HepG2 (cell line): ENCODE measurements at regions of chr20 and their contacts with region 1.

Region 1: DNA sequence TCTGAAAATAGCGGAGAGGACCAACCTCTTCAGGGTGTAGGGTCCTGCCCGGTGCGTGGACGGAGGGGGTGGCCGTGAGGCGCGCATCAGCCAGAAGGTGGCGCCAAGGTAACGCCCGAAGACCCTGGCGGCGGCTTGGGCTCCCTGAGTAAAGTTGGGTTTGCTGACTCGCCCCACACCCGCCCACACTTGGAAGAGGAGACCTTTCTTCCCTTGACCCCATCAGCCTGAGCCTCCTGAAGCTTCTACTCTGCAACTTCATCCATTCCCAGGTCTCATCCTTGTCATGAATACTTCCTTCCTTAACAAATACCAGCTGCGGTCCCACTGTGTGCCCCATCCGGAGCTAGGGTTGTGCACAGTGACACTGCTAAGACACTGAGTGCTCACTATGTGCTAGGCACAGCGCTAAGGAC is 14.6 kb downstream of the CD40 start:
- DNase-seq: peak; percentile 53
- ATAC-seq: peak; percentile 94
- H3K4me3 ChIP-seq: no peak overlapping the region
- H3K27ac ChIP-seq: no peak overlapping the region
- H3K4me1 ChIP-seq: no peaks in the 10 kb centered on the region
- H3K27me3 ChIP-seq: peaks cover 16 to 75% of the 10 kb centered on the region in 2 experiments
- CTCF ChIP-seq: peak; percentile 97
- EP300 ChIP-seq: no peak
- POLR2A ChIP-seq: no peak
- RAD21 ChIP-seq: peak; percentile 98

Region 2: DNA sequence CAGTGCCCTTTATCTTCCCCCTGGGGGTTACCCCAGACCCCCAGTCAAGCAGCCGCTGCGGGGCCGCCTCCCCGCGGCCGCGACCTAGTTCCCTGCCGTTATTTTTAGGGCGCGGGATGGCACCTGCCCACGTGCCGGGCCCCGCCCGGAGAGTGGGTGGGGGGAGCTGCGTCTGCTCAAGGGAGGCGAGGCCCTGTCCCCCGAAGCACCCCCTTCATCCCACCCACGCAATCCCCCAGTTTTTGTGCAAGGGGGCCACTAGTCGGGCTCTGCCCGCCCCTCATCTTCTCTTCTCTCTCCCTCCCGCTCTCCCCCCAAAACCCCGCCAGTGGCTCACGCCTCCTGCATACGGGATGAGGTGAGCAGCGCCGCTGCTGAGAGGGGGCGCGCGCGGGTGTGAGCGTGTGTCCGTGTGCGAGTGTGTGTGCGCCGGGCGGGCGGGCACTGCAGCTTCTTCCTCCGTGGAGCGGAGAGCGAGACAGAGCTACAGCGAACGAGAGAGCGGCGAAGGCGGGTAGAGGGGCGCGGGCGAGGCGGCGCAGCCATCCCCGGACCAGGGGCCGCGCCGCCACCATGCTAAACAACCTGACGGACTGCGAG is 103.8 kb before region 1 on chr20 and contains the start of gene SLC12A5:
- CTCF ChIA-PET with region 1: no interaction called
- POLR2A ChIA-PET with region 1: no interaction called
- in situ Hi-C with region 1: no loop called
- intact Hi-C with region 1: no loop called
- DNase-seq: no peak
- ATAC-seq: no peak; the same call in 2 of the 3 replicates
- H3K4me3 ChIP-seq: no peak within 1 kb of the TSS
- H3K27ac ChIP-seq: no peak within 1 kb of the TSS
- H3K4me1 ChIP-seq: no peaks in the 10 kb centered on the region
- H3K27me3 ChIP-seq: peaks cover 7 to 32% of the 10 kb centered on the region in 2 experiments
- CTCF ChIP-seq: no peak
- EP300 ChIP-seq: no peak
- POLR2A ChIP-seq: no peak
- RAD21 ChIP-seq: no peak
- total RNA-seq, gene SLC12A5: 5.3 and 5.4 TPM in 2 replicates

Region 3: GRCh38 chr20:46151936-46152335 is 19.2 kb after region 1 on chr20:
- CTCF ChIA-PET with region 1: interaction called, 12 read pairs
- POLR2A ChIA-PET with region 1: no interaction called
- in situ Hi-C with region 1: no loop called
- intact Hi-C with region 1: no loop called
- DNase-seq: peak; percentile 45
- ATAC-seq: peak; percentile 88
- H3K4me3 ChIP-seq: no peak overlapping the region
- H3K27ac ChIP-seq: no peak overlapping the region
- H3K4me1 ChIP-seq: peaks cover 9% of the 10 kb centered on the region; the same call in 1 of the 2 replicates
- H3K27me3 ChIP-seq: peaks cover 2 to 46% of the 10 kb centered on the region in 2 experiments; a peak in 4 of 5 replicates
- CTCF ChIP-seq: peak; percentile 79
- EP300 ChIP-seq: no peak
- POLR2A ChIP-seq: no peak
- RAD21 ChIP-seq: peak; percentile 72

Region 4: DNA sequence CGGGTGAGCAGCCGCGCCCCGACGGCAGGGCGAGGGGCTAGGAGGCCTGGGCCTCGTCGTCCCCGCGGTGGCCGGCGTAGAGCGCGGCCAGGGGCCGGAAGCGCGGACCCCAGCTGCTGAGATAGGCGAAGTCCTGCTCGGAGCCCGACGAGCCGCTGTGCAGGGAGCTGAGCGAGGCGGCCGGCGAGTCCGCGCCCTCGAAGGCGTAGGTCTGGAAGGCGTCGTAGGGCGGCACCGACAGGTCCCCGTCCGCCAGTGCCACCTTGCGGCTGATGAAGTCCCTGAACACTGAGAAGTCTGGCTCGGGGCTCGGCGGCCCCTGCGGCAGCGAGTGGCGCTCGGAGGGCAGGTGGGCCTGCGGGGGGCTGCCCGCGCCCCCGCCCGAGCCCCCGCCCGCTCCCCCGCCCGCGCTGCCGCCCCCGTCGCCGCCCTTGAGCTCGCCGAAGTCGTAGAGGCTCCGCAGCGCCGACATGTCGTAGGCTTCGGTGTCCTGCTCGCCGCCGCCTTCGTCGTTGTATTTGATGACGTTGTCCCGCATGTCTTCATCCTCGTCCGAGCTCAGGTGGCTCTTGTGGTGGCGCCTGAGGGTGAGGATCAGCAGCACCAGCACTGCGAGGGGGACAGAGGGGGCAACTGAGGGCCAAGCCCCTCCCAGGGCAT is 41.9 kb after region 1 on chr20:
- CTCF ChIA-PET with region 1: interaction called, 19 read pairs
- POLR2A ChIA-PET with region 1: no interaction called
- in situ Hi-C with region 1: no loop called
- intact Hi-C with region 1: loop called (anchors 1 kb)
- DNase-seq: peak; percentile 57
- ATAC-seq: peak; percentile 90
- H3K4me3 ChIP-seq: no peak overlapping the region; a peak in 1 of 6 replicates
- H3K27ac ChIP-seq: no peak overlapping the region
- H3K4me1 ChIP-seq: no peaks in the 10 kb centered on the region
- H3K27me3 ChIP-seq: peaks cover 12 to 82% of the 10 kb centered on the region in 2 experiments; a peak in 4 of 5 replicates
- CTCF ChIP-seq: peak; percentile 87
- EP300 ChIP-seq: no peak
- POLR2A ChIP-seq: no peak
- RAD21 ChIP-seq: peak; percentile 89

Region 5: DNA sequence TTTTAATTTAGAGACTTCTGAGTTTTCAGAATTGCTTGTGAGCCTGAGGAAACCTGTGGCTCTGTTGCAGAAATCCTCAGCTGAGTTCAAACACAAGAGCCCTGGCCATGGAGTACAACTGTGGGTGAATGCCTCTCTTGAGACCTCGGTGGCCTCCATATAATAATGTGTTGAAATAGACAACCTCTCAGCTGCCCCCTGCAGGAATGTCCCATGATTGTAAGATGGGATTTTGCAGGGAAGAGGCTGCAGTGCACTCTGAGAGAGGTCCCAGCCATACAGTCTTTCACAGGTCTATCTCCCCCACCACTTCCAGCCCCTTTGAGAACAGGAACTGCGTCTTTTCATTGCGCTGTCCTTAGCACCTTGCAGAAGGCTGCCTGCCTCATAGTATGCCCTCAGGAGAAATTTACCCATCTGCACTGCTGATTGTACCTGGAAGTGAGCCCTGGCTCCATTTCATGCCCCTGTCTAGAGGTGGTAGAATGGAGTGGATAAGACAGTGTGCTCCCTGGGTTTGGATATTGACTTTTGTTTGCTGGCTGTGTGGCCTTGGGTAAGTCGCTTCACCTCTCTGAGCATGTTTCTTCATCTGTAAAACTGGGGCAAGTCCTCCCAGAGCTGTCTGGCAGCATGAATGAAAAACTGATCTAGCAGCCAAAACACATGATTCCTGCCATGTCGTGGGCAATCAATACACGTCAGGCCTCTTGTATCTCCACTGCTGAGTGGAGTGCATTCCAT is 192.4 kb after region 1 on chr20:
- CTCF ChIA-PET with region 1: interaction called, 4 read pairs
- POLR2A ChIA-PET with region 1: no interaction called
- in situ Hi-C with region 1: no loop called
- intact Hi-C with region 1: loop called (anchors 1 kb)
- DNase-seq: peak; percentile 69
- ATAC-seq: peak; percentile 91
- H3K4me3 ChIP-seq: no peak overlapping the region
- H3K27ac ChIP-seq: no peak overlapping the region
- H3K4me1 ChIP-seq: no peaks in the 10 kb centered on the region
- H3K27me3 ChIP-seq: peaks cover 12 to 53% of the 10 kb centered on the region in 2 experiments
- CTCF ChIP-seq: peak; percentile 68
- EP300 ChIP-seq: no peak
- POLR2A ChIP-seq: no peak
- RAD21 ChIP-seq: 0 out of 2 replicates have a peak, but pooled peaks have one; percentile 33

Region 6: GRCh38 chr20:46349035-46349741 is 216.5 kb after region 1 on chr20:
- CTCF ChIA-PET with region 1: no interaction called
- POLR2A ChIA-PET with region 1: no interaction called
- in situ Hi-C with region 1: no loop called
- intact Hi-C with region 1: loop called (anchors 1 kb)
- DNase-seq: peak; percentile 46
- ATAC-seq: peak; percentile 58
- H3K4me3 ChIP-seq: no peak overlapping the region
- H3K27ac ChIP-seq: no peak overlapping the region
- H3K4me1 ChIP-seq: peaks cover 39% of the 10 kb centered on the region
- H3K27me3 ChIP-seq: no peaks in the 10 kb centered on the region
- CTCF ChIP-seq: peak; percentile 96
- EP300 ChIP-seq: no peak
- POLR2A ChIP-seq: no peak
- RAD21 ChIP-seq: peak; percentile 87

Region 7: GRCh38 chr20:47038566-47039560 is 906.1 kb after region 1 on chr20:
- CTCF ChIA-PET with region 1: no interaction called
- POLR2A ChIA-PET with region 1: no interaction called
- in situ Hi-C with region 1: no loop called
- intact Hi-C with region 1: no loop called
- DNase-seq: no peak
- ATAC-seq: no peak
- H3K4me3 ChIP-seq: no peak overlapping the region
- H3K27ac ChIP-seq: no peak overlapping the region
- H3K4me1 ChIP-seq: no peaks in the 10 kb centered on the region
- H3K27me3 ChIP-seq: peaks cover 2 to 24% of the 10 kb centered on the region in 2 experiments; a peak in 4 of 5 replicates
- CTCF ChIP-seq: no peak
- EP300 ChIP-seq: no peak
- POLR2A ChIP-seq: no peak
- RAD21 ChIP-seq: no peak